Ovary (tissue), 10 donors: ENCODE measurements at regions of chr14 and their contacts with region 1.

Region 1: GRCh38 chr14:105020815-105021655 is at the start of gene CDCA4:
- DNase-seq: peak; percentile 96 to 98 (median 97)
- H3K4me3 ChIP-seq: peak within 1 kb of the TSS; percentile 54
- H3K27ac ChIP-seq: peak within 1 kb of the TSS in 1 of 2 donors; percentile 67
- H3K4me1 ChIP-seq: peaks cover 12% of the 10 kb centered on the region
- H3K27me3 ChIP-seq: no peaks in the 10 kb centered on the region
- CTCF ChIP-seq: peak in 1 of 3 donors; percentile 25
- EP300 ChIP-seq: no peak
- POLR2A ChIP-seq: peak; percentile 75
- total RNA-seq, gene CDCA4: 6.3 to 9.4 (median 7.6) TPM

Region 2: GRCh38 chr14:104957146-104958113 is 63.6 kb before region 1 on chr14:
- intact Hi-C with region 1: no loop called
- DNase-seq: peak in 2 of 5 donors; percentile 9 to 24
- H3K4me3 ChIP-seq: no peak overlapping the region
- H3K27ac ChIP-seq: no peak overlapping the region
- H3K4me1 ChIP-seq: no peaks in the 10 kb centered on the region
- H3K27me3 ChIP-seq: no peaks in the 10 kb centered on the region
- CTCF ChIP-seq: no peak
- EP300 ChIP-seq: no peak
- POLR2A ChIP-seq: no peak

Region 3: DNA sequence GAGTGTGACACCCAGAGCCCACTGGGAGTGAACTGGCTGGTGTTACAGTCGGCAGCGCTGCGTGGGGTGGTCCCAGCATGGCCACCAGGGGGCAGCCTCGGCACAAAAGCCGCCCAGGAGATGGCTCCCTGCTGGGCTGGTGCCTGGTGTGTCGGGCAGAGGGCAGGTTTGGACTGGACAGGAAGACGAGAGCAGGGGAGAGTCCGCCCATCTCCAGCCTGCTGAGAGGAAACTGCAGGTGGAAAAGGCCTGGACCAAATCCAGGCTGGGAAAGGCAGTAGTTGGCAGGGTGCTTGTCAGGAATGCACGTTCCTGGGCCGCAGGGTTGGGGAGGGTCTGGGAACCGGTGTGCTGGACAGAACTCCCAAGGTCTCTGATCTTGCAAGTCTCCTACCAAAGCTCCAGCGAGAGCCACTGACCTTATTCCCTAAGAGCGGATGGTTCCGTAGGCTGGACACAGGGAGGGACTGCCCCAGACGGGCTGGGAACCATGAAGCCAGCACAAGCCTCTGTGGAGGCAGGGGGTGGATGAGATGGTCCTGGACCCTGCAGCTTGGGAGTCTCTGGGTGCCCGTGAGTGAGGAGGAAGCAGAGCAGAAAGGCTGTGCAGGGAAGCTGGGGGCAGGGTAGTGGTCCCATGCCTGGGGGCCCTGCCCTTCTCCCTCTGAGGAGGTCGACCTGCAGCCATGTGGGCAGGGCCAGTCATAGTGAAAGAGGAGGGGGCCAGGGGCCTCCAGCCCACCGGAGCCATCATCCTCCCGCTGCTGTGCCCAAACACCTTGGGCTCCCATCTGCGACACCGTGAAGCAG is 44.6 kb before region 1 on chr14:
- intact Hi-C with region 1: loop called in 1 of 4 experiments (anchors 5 kb)
- DNase-seq: peak; percentile 61 to 83 (median 74)
- H3K4me3 ChIP-seq: no peak overlapping the region
- H3K27ac ChIP-seq: no peak overlapping the region
- H3K4me1 ChIP-seq: peaks cover 29% of the 10 kb centered on the region
- H3K27me3 ChIP-seq: no peaks in the 10 kb centered on the region
- CTCF ChIP-seq: peak; percentile 42 to 65 (median 60)
- EP300 ChIP-seq: no peak
- POLR2A ChIP-seq: no peak

Region 4: GRCh38 chr14:104985675-104986525 is 35.1 kb before region 1 on chr14 and contains the start of gene CLBA1:
- intact Hi-C with region 1: loop called in 2 of 4 experiments (anchors 5 kb)
- DNase-seq: peak; percentile 86 to 94 (median 91)
- H3K4me3 ChIP-seq: peak within 1 kb of the TSS; percentile 75
- H3K27ac ChIP-seq: no peak within 1 kb of the TSS
- H3K4me1 ChIP-seq: peaks cover 4% of the 10 kb centered on the region
- H3K27me3 ChIP-seq: no peaks in the 10 kb centered on the region
- CTCF ChIP-seq: no peak
- EP300 ChIP-seq: no peak
- POLR2A ChIP-seq: no peak
- total RNA-seq, gene CLBA1: 3.5 to 15.7 (median 9.6) TPM